AG04449 (cell line): ENCODE measurements at regions of chr1 and their contacts with region 1.

Region 1: DNA sequence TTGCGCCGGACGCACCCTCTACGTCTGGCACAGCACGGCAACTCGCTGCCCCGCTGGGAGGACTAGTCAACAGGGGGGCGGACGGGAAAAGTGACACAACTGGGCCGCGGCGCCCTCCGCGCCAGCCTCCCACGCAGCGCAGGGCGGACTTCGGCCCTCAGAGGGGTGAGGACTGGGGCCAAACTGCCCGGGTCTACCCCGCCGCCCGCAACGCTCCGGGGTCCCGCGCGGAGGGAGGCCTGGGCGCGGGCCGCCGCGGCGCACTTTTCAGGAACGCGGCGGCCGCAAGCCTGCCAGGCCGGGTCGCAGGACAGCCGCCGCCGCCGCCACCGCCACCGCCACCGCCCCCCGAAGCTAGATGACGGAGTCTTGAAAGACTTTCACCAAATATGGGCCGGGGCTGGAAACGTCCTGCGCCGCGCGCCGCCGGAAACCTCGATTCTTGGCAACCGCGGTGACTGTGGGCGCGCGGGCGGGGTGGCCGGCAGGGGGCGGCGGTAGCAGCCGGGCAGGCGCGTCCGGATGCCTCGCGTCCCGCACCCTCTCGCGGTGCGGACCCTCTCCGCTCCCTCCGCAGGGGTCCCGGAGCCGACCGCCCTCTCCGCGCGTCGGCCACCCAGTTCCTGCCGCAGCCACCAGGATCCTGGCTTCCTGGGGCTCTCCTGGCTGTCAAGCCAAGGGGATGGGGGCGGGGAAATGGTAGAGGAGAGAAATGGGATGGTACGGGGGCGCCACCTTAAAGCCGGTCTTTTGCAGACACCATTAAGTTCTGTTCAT is 3.7 kb upstream of the CCN1 start:
- DNase-seq: no peak
- H3K4me3 ChIP-seq: peak overlapping the region; percentile 96
- CTCF ChIP-seq: peak; percentile 63

Region 2: DNA sequence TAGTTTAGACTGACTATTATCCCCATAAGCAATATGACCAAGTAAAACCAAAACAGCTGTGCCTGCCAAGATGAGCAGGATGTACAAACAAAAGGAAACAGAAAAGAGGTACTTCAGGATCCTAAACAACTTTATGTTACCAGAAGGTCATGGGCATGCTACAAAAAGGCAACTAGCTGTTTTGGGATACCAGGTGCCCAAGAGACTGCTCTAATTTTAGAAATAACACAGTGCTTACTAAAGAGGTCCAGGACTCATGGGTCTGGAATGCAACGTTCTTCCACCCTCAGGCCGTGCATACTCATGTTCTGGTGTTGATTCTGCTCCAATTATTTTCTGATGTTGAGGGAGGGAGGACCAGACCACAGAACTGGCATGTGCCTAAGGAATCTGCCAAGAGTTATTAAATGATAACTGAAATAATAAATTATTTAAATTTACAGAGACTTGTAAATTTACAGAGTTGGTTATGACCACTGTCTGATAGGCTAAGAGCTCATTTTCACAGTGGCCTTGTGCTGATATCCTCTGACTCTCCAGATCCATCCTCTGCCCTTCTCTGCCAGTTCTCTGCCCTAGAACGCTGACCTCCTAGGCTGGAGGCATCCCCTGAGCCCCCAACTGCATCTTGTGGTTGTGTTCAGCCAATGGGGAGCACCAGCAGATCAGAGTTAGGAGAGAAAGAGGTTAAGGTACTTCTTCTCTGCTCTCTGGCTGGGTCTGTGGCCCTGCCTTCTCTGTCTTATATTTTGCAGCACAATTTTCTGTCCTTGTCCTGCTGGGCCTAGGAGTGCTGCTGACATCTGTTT is 262.7 kb before region 1 on chr1:
- CTCF ChIA-PET with region 1: interaction called, 6 read pairs
- POLR2A ChIA-PET with region 1: interaction called, 10 read pairs
- DNase-seq: peak; percentile 93
- H3K4me3 ChIP-seq: no peak overlapping the region
- CTCF ChIP-seq: no peak

Region 3: GRCh38 chr1:85344256-85344694 is 232.6 kb before region 1 on chr1:
- CTCF ChIA-PET with region 1: interaction called, 4 read pairs
- POLR2A ChIA-PET with region 1: interaction called, 30 read pairs
- DNase-seq: no peak
- H3K4me3 ChIP-seq: no peak overlapping the region
- CTCF ChIP-seq: peak; percentile 76

Region 4: DNA sequence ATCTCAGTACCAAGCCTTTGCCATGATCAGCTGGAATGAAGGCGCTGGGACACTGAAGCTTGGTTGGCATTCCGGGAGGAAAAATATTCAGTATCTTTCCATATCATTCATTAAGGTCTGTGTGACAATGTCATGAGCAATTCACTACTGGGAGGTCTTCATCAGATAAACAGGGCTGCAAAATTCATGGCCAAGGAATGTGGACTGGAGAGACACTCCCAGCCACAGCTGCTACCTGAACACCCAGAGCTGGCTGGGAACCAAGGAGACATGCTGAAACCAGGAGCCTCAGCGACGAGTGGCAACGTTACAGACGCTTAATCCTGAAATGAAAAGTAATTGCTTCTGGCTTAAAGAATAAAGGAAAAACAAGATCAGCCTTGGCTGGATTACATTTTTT is 81.3 kb before region 1 on chr1:
- CTCF ChIA-PET with region 1: no interaction called
- POLR2A ChIA-PET with region 1: interaction called, 20 read pairs
- DNase-seq: no peak
- H3K4me3 ChIP-seq: no peak overlapping the region
- CTCF ChIP-seq: no peak

Region 5: DNA sequence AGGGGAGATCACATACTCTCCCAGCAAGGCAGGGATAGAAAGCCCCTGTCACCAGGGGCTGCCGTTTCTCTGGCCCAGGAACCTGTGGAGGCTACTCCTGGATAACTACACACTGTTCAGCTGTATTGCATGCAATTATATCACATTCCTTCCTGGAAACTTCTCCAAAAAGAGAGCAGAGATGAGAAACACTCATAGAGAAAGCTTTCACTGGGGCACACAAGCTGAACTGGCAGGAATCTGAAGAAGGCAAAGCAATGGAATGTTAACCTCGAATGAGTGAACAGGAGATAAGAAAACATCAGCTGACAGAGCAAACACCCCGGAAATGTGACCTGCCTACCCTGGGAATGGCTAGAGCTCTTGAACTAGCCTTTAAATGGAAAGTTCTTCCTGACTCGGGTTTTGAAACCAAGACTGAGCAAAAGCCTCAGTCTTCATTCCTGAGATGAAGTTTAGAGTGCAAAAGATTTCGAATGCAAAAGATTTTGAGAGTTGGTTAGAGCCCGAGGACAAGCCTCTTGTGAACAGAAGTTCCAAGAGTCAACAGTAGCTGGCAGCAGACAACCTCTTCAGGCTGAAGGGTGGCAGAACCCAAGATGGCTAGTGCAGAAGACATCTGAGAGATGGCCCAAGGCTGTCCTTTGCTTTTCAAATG is 36.0 kb after region 1 on chr1:
- CTCF ChIA-PET with region 1: no interaction called
- POLR2A ChIA-PET with region 1: interaction called, 156 read pairs
- DNase-seq: peak; percentile 97
- H3K4me3 ChIP-seq: no peak overlapping the region
- CTCF ChIP-seq: peak; percentile 58

Region 6: GRCh38 chr1:85628791-85629531 is 52.1 kb after region 1 on chr1:
- CTCF ChIA-PET with region 1: no interaction called
- POLR2A ChIA-PET with region 1: interaction called, 18 read pairs
- DNase-seq: peak; percentile 92
- H3K4me3 ChIP-seq: peak overlapping the region; percentile 46
- CTCF ChIP-seq: no peak